Left lung (tissue), 14 donors: ENCODE measurements at regions of chr10 and their contacts with region 1.

Region 1: DNA sequence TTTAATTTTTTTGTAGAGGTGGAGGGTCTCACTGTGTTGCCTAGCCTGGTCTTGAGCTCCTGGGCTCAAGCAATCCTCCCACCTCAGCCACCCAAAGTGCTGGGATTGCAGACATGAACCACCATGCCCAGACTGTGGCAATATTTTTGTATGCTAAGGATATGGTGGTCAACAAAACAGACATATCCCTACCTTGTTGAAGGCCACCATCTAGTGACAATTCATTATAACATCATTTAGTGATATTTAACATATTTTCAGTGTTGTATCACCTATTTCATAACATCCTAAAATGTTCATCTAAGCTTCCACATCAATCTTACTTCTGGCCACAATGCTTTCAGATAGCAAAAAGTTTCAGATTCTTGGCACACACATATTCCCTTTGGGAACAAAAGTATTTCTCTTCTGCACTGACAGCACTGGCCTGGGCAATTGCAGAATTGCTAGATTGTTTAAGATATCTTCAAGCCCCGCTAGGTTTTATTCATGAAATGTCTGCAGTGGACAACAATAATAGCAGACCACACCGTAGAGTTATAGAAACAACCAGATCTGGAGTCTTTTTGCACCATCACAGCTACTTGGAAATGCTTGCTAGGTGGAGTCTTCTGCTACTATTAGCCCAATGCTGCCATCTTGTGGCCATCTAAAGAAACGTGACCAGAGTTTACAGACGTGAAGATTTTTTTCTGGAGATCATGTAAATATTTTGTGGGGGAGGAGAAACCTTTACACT is 58.4 kb downstream of the DNAJC12 start:
- DNase-seq: peak in 2 of 4 donors; percentile 69 to 84
- ATAC-seq: peak; percentile 92
- H3K4me3 ChIP-seq: no peak overlapping the region
- H3K27ac ChIP-seq: no peak overlapping the region
- H3K4me1 ChIP-seq: no peaks in the 10 kb centered on the region
- H3K27me3 ChIP-seq: no peaks in the 10 kb centered on the region
- CTCF ChIP-seq: peak; percentile 66 to 71

Region 2: DNA sequence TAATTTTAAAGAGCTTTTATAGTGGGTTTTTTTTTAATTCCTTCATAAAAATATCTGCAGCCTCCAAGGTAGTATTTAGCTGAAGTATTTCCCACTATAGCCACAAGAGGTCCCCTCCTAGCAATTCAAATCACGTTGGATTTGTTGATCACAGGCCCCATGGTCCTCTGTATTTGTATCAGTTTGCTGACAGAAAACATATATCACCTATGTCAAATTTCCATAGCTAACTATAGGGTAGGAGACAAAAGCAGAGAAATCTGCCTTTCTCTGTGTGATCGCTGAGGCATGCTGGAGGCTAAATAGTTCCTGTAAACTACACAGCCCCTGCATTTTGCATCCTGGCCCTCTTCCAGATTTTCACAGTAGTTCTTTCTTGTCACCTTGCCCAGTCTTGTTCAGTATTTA is 81.9 kb before region 1 on chr10:
- intact Hi-C with region 1: loop called in 1 of 2 experiments (anchors 5 kb)
- DNase-seq: peak in 2 of 4 donors; percentile 35 to 37
- ATAC-seq: peak; percentile 73
- H3K4me3 ChIP-seq: no peak overlapping the region
- H3K27ac ChIP-seq: no peak overlapping the region
- H3K4me1 ChIP-seq: no peaks in the 10 kb centered on the region
- H3K27me3 ChIP-seq: peaks cover 3 to 10% of the 10 kb centered on the region in 2 donors
- CTCF ChIP-seq: peak; percentile 48 to 63

Region 3: DNA sequence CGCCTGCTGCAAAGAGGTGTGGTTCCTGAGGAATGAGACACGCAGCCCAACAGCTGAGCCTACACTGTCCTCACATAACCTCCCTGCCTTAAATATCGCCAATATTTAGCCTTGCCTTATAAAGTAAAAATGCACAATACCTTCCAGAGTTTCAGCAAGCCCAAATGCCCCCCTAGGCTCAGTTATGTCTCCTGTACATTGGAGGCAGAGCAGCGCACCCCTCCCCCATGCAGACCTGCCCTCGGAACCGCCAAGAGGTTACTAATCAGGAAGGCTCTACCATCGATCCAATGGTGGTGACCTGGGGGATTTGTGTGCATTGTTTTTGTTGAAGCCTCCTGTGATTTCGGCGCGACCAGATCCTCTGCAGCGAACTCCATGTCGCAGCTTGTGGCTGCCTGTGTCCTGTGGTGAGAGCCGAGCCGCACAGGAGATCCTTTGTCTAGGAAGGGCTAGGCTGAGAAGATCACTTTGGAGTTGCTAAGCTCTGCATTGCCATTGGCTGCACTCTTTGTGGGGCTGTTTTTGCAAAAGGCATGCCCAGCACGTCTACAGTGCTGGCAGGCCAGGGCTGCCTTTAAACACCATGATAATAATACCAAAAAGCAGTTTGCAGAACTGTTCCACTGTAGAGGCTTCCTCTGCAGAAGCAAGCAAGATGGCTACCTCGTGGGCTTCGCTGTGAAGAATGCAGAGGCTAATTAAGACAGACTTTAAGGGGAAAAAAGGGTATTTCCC is 820.6 kb after region 1 on chr10:
- intact Hi-C with region 1: no loop called
- DNase-seq: peak; percentile 61 to 90 (median 78)
- ATAC-seq: peak; percentile 93
- H3K4me3 ChIP-seq: peak overlapping the region; percentile 33 to 43
- H3K27ac ChIP-seq: peak overlapping the region; percentile 37 to 63
- H3K4me1 ChIP-seq: peaks cover 13 to 20% of the 10 kb centered on the region in 2 donors
- H3K27me3 ChIP-seq: no peaks in the 10 kb centered on the region
- CTCF ChIP-seq: no peak